Caco-2 (cell line): ENCODE measurements at regions of chr20 and their contacts with region 1.

Region 1: DNA sequence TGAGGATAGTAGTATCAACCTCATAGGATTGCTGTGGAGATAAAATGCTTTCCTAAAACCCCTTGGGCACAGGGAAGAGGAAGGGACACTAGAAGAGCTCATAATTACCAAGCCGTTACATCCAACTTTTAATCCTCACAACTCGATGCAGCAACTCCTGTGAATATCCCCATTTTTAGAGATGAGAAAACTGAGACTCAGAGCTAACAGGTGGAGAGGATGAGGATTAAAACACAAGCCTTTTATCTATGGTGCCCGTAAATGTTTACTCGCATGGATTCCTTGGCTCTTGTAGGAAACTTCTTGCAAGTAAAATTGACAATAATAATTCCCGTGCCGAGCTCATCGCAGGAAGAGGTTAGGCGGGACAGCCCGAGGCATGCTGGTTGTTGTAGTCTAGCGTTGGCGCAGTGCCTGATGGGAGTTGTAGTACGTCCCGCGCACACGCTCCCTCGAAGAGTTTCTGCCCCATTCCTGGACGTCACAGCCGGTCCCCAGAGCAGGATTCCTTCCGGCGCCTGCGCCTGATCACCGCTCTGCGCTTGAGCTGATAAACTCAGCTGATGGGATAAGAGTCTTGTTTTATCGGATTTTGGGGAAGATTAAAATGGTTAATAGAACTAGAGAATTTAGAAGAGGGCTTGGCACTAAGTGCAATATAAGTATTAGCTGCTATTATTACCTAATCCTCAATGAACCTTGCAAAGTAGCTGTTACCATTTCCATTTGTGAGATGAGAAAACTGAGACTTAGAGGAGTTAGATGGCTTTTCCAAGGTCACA is 2.8 kb upstream of the UBE2V1 start:
- DNase-seq: peak; percentile 98
- H3K4me3 ChIP-seq: peak overlapping the region; percentile 43
- H3K4me3 Mint-ChIP-seq: peak overlapping the region; percentile 96
- H3K27ac Mint-ChIP-seq: peak overlapping the region; percentile 85
- H3K4me1 ChIP-seq: peaks cover 30% of the 10 kb centered on the region
- H3K4me1 Mint-ChIP-seq: peaks cover 44% of the 10 kb centered on the region
- H3K27me3 ChIP-seq: no peaks in the 10 kb centered on the region
- H3K27me3 Mint-ChIP-seq: no peaks in the 10 kb centered on the region
- CTCF ChIP-seq: no peak

Region 2: DNA sequence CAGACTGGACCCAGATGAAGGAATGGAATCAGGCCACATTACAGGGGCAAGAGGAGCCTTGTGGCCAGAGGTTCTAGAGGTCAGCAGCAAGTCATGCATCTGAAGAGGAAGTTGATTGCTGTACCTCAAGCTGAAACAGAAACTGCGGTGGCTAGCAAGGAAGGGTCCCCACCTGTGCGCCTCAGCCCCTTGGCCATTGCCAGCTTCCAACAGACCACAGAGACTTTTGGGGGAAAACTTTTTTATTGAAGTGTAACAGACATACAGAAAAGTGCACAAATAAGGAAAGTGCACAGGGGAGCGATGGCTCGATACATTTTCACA is 330.0 kb before region 1 on chr20:
- CTCF ChIA-PET with region 1: no interaction called
- POLR2A ChIA-PET with region 1: no interaction called
- intact Hi-C with region 1: no loop called
- DNase-seq: no peak
- H3K4me3 ChIP-seq: no peak overlapping the region
- H3K4me3 Mint-ChIP-seq: no peak overlapping the region
- H3K27ac Mint-ChIP-seq: no peak overlapping the region
- H3K4me1 ChIP-seq: peaks cover 23% of the 10 kb centered on the region
- H3K4me1 Mint-ChIP-seq: peaks cover 11% of the 10 kb centered on the region
- H3K27me3 ChIP-seq: no peaks in the 10 kb centered on the region
- H3K27me3 Mint-ChIP-seq: no peaks in the 10 kb centered on the region
- CTCF ChIP-seq: no peak

Region 3: DNA sequence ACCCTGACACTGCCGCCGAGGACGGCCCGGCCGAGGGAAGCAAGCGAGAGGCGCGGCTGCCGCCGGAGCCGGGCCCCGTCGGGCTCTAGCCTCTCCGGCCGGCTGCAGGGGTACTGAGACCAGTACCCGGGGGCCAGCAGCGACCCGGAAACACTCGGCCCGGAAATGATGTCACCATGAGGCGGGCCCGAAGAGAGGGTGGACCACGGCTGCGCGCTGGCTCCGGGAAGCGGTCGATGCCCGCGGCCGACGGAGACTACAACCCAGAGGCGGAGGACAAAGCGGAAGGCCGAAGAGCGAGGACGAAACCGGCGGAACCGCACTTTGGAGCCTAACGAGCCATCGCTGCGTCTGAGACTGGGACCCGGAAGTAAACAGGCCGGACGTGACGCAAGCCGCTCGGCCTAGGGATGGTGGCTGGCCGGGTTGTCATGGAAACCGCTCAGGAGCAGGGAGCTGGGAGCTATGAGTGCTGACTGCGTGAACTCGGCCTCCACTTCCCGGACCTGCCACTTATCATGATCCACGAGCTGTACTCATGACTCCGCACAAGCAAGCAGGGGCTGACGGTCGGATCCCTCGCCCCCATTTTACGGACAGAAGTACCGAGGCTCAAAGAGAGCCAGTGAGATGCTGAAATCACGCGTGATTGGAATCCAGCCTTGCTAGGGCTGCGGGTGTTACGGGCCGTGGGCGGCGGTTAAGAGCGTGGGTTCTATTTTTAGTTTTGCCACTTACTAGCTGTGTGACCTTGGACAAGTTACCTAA is 200.2 kb before region 1 on chr20 and contains the start of gene SPATA2:
- CTCF ChIA-PET with region 1: interaction called, 5 read pairs
- POLR2A ChIA-PET with region 1: interaction called, 11 read pairs
- intact Hi-C with region 1: no loop called
- DNase-seq: peak; percentile 100
- H3K4me3 ChIP-seq: peak within 1 kb of the TSS; percentile 80
- H3K4me3 Mint-ChIP-seq: peak within 1 kb of the TSS; percentile 99
- H3K27ac Mint-ChIP-seq: peak within 1 kb of the TSS; percentile 100
- H3K4me1 ChIP-seq: peaks cover 20% of the 10 kb centered on the region
- H3K4me1 Mint-ChIP-seq: peaks cover 25% of the 10 kb centered on the region
- H3K27me3 ChIP-seq: no peaks in the 10 kb centered on the region
- H3K27me3 Mint-ChIP-seq: no peaks in the 10 kb centered on the region
- CTCF ChIP-seq: no peak
- total RNA-seq, gene SPATA2: 29.0 TPM in 2 replicates

Region 4: GRCh38 chr20:50101281-50101680 is 14.5 kb before region 1 on chr20:
- CTCF ChIA-PET with region 1: interaction called, 5 read pairs
- POLR2A ChIA-PET with region 1: interaction called, 11 read pairs
- intact Hi-C with region 1: loop called (anchors 1 kb)
- DNase-seq: peak in 1 of 2 experiments; percentile 45
- H3K4me3 ChIP-seq: no peak overlapping the region
- H3K4me3 Mint-ChIP-seq: no peak overlapping the region
- H3K27ac Mint-ChIP-seq: peak overlapping the region; percentile 34
- H3K4me1 ChIP-seq: peaks cover 69% of the 10 kb centered on the region
- H3K4me1 Mint-ChIP-seq: peaks cover 45% of the 10 kb centered on the region
- H3K27me3 ChIP-seq: no peaks in the 10 kb centered on the region
- H3K27me3 Mint-ChIP-seq: no peaks in the 10 kb centered on the region
- CTCF ChIP-seq: no peak

Region 5: GRCh38 chr20:50153485-50154377 is 37.9 kb after region 1 on chr20 and contains the start of gene PEDS1:
- CTCF ChIA-PET with region 1: interaction called, 91 read pairs
- POLR2A ChIA-PET with region 1: interaction called, 57 read pairs
- intact Hi-C with region 1: loop called (anchors 1 kb)
- DNase-seq: peak; percentile 95 to 99
- H3K4me3 ChIP-seq: peak within 1 kb of the TSS; percentile 96
- H3K4me3 Mint-ChIP-seq: peak within 1 kb of the TSS; percentile 82
- H3K27ac Mint-ChIP-seq: peak within 1 kb of the TSS; percentile 91
- H3K4me1 ChIP-seq: peaks cover 32% of the 10 kb centered on the region
- H3K4me1 Mint-ChIP-seq: peaks cover 45% of the 10 kb centered on the region
- H3K27me3 ChIP-seq: no peaks in the 10 kb centered on the region
- H3K27me3 Mint-ChIP-seq: no peaks in the 10 kb centered on the region
- CTCF ChIP-seq: peak; percentile 0 to 5
- total RNA-seq, gene PEDS1: 78.3 and 84.1 TPM in 2 replicates

Region 6: GRCh38 chr20:50172347-50173013 is 56.7 kb after region 1 on chr20:
- CTCF ChIA-PET with region 1: interaction called, 82 read pairs
- POLR2A ChIA-PET with region 1: interaction called, 26 read pairs
- intact Hi-C with region 1: no loop called
- DNase-seq: peak; percentile 99
- H3K4me3 ChIP-seq: peak overlapping the region; percentile 47
- H3K4me3 Mint-ChIP-seq: peak overlapping the region; percentile 70
- H3K27ac Mint-ChIP-seq: peak overlapping the region; percentile 48
- H3K4me1 ChIP-seq: peaks cover 18% of the 10 kb centered on the region
- H3K4me1 Mint-ChIP-seq: peaks cover 13% of the 10 kb centered on the region
- H3K27me3 ChIP-seq: no peaks in the 10 kb centered on the region
- H3K27me3 Mint-ChIP-seq: no peaks in the 10 kb centered on the region
- CTCF ChIP-seq: peak in 1 of 2 experiments; percentile 0

Region 7: GRCh38 chr20:50179507-50180016 is 63.8 kb after region 1 on chr20:
- CTCF ChIA-PET with region 1: interaction called, 55 read pairs
- POLR2A ChIA-PET with region 1: interaction called, 4 read pairs
- intact Hi-C with region 1: no loop called
- DNase-seq: no peak
- H3K4me3 ChIP-seq: no peak overlapping the region
- H3K4me3 Mint-ChIP-seq: no peak overlapping the region
- H3K27ac Mint-ChIP-seq: peak overlapping the region; percentile 14
- H3K4me1 ChIP-seq: no peaks in the 10 kb centered on the region
- H3K4me1 Mint-ChIP-seq: peaks cover 7% of the 10 kb centered on the region
- H3K27me3 ChIP-seq: no peaks in the 10 kb centered on the region
- H3K27me3 Mint-ChIP-seq: no peaks in the 10 kb centered on the region
- CTCF ChIP-seq: peak in 1 of 2 experiments; percentile 50